ENCODE measurements at regions of chr10 and their contacts with region 1.

Region 1: DNA sequence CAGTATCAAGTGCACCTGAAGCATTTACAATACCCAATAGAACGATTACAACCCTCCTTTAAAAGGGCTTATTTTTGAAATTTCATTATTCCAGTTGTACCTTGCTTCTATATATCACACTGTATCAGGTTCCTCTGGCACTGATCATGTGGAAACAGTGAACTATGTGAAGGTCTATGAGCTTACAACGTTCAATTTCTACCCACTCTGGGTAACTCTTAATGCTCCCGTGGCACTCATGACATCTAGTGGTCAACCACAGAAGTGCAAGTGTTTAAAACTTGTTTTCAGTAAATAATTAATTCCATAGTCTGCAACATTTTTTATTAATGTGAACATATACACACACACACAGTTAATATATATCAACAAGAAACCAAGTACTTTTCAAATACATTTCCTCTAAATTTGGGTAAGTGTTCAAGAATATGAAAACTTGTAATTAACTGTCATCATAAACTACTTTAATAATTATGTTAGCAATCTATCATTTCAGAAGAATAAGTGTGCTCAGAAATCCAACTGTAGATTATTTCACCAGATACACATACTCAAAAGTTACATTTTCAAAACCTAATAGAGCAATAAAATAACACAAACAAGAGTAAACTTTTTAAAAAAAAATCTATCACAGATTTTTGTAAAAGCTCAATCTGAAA is 61.0 kb downstream of the MPP7 start:
- DNase-seq: peak in 1 of 2 experiments; percentile 67
- H3K4me3 ChIP-seq: no peak overlapping the region
- H3K4me3 Mint-ChIP-seq: no peak overlapping the region
- H3K27ac Mint-ChIP-seq: no peak overlapping the region
- H3K4me1 ChIP-seq: peaks cover 13% of the 10 kb centered on the region
- H3K4me1 Mint-ChIP-seq: no peaks in the 10 kb centered on the region
- H3K27me3 ChIP-seq: no peaks in the 10 kb centered on the region
- H3K27me3 Mint-ChIP-seq: no peaks in the 10 kb centered on the region
- CTCF ChIP-seq: peak; percentile 91 to 92

Region 2: DNA sequence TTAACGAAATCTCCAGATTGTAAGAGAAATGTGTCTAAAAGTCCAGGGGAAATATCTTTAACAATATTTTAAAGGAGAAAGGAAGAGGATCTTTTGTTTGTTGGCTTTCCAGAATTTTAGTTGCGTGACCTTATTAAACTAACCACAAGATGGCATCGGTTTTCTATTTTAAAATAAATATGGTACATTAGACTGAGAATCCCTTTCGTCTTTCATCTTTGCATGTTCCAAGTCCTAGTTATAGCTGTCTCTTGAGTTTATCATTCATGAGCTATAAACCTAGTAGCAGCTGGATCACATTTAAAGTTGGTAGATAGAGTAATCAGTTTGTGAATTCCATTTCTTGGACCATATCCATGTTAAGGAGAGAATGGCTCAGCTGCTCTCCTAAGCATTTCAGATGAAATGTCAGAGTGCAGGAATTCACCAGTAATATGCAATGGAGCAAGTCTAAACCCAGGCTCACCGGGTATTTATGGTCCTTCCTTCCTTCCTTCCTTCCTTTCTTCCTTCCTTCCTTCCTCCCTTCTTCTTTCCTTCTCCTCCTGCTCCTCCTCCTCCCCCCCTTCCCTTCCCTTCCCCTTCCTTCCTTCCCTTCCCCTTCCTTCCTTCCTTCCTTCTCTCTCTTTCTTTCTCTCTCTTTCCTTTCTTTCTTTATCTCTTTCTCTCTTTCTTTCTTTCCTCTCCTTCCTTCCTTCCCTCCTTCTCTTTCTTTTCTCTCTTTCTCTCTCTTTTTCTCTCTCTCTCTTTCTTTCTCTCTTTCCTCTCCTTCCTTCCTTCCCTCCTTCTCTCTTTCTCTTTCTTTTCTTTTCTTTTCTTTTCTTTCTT is 795.6 kb before region 1 on chr10:
- CTCF ChIA-PET with region 1: no interaction called
- POLR2A ChIA-PET with region 1: no interaction called
- intact Hi-C with region 1: loop called (anchors 5 kb)
- DNase-seq: peak in 1 of 2 experiments; percentile 34
- H3K4me3 ChIP-seq: no peak overlapping the region
- H3K4me3 Mint-ChIP-seq: peak overlapping the region; percentile 4
- H3K27ac Mint-ChIP-seq: no peak overlapping the region
- H3K4me1 ChIP-seq: no peaks in the 10 kb centered on the region
- H3K4me1 Mint-ChIP-seq: peaks cover 10% of the 10 kb centered on the region
- H3K27me3 ChIP-seq: no peaks in the 10 kb centered on the region
- H3K27me3 Mint-ChIP-seq: no peaks in the 10 kb centered on the region
- CTCF ChIP-seq: peak; percentile 36 to 51

Region 3: GRCh38 chr10:27742195-27743011 is 499.5 kb before region 1 on chr10:
- CTCF ChIA-PET with region 1: interaction called, 8 read pairs
- POLR2A ChIA-PET with region 1: no interaction called
- intact Hi-C with region 1: loop called (anchors 1 kb)
- DNase-seq: peak; percentile 81 to 94
- H3K4me3 ChIP-seq: peak overlapping the region; percentile 75
- H3K4me3 Mint-ChIP-seq: peak overlapping the region; percentile 75
- H3K27ac Mint-ChIP-seq: no peak overlapping the region
- H3K4me1 ChIP-seq: peaks cover 25% of the 10 kb centered on the region
- H3K4me1 Mint-ChIP-seq: peaks cover 5% of the 10 kb centered on the region
- H3K27me3 ChIP-seq: peaks cover 11% of the 10 kb centered on the region
- H3K27me3 Mint-ChIP-seq: peaks cover 30% of the 10 kb centered on the region
- CTCF ChIP-seq: peak; percentile 78 to 86

Region 4: DNA sequence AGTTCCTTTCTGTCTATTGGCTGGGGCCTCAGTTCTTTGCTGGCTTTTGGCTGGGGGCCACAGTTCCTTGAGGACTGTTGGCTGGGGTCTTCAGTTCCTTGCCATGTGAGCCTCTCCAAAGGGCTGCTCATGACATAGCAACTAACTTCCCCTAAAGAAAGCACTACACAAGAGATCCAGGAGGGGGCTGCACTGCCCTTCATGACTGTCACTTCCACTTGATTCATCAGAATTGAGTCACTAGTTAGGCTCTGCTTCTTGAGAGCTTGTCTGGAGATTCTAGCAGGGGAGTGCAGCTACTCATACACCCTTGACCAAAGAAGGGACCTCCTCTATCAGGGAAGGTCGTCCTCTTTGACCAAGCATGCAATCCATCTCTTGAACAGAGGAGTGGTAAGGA is 458.2 kb before region 1 on chr10:
- CTCF ChIA-PET with region 1: interaction called, 7 read pairs
- POLR2A ChIA-PET with region 1: no interaction called
- intact Hi-C with region 1: loop called (anchors 1 kb)
- DNase-seq: peak; percentile 51 to 52
- H3K4me3 ChIP-seq: no peak overlapping the region
- H3K4me3 Mint-ChIP-seq: no peak overlapping the region
- H3K27ac Mint-ChIP-seq: no peak overlapping the region
- H3K4me1 ChIP-seq: no peaks in the 10 kb centered on the region
- H3K4me1 Mint-ChIP-seq: no peaks in the 10 kb centered on the region
- H3K27me3 ChIP-seq: no peaks in the 10 kb centered on the region
- H3K27me3 Mint-ChIP-seq: peaks cover 39% of the 10 kb centered on the region
- CTCF ChIP-seq: peak; percentile 35 to 72

Region 5: DNA sequence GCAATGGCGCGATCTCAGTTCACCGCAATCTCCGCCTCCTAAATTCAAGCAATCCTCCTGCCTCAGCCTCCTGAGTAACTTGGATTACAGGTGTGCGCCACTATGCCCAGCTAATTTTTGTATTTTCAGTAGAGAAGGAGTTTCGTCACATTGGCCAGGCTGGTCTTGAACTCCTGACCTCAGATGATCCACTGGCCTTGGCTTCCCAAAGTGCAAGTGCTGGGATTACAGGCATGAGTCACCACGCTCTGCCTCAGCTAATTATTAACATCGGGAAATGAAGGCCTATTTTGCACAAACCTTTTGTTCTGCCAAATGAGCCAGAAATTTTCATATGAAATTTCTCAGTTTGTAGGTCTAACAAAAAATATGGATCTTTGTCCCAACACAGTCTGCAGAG is 136.3 kb before region 1 on chr10:
- CTCF ChIA-PET with region 1: interaction called, 3 read pairs
- POLR2A ChIA-PET with region 1: no interaction called
- intact Hi-C with region 1: loop called (anchors 10 kb)
- DNase-seq: no peak
- H3K4me3 ChIP-seq: no peak overlapping the region
- H3K4me3 Mint-ChIP-seq: no peak overlapping the region
- H3K27ac Mint-ChIP-seq: no peak overlapping the region
- H3K4me1 ChIP-seq: no peaks in the 10 kb centered on the region
- H3K4me1 Mint-ChIP-seq: no peaks in the 10 kb centered on the region
- H3K27me3 ChIP-seq: no peaks in the 10 kb centered on the region
- H3K27me3 Mint-ChIP-seq: no peaks in the 10 kb centered on the region
- CTCF ChIP-seq: no peak

Region 6: GRCh38 chr10:28179006-28179742 is 62.7 kb before region 1 on chr10:
- CTCF ChIA-PET with region 1: interaction called, 21 read pairs
- POLR2A ChIA-PET with region 1: no interaction called
- intact Hi-C with region 1: loop called (anchors 1 kb)
- DNase-seq: peak in 1 of 2 experiments; percentile 69
- H3K4me3 ChIP-seq: no peak overlapping the region
- H3K4me3 Mint-ChIP-seq: no peak overlapping the region
- H3K27ac Mint-ChIP-seq: no peak overlapping the region
- H3K4me1 ChIP-seq: 0 out of 2 replicates have a peak, but pooled peaks cover 7% of the 10 kb centered on the region
- H3K4me1 Mint-ChIP-seq: peaks cover 22% of the 10 kb centered on the region
- H3K27me3 ChIP-seq: no peaks in the 10 kb centered on the region
- H3K27me3 Mint-ChIP-seq: no peaks in the 10 kb centered on the region
- CTCF ChIP-seq: peak; percentile 75 to 88

Region 7: GRCh38 chr10:28393966-28394568 is 152.2 kb after region 1 on chr10:
- CTCF ChIA-PET with region 1: interaction called, 10 read pairs
- POLR2A ChIA-PET with region 1: no interaction called
- intact Hi-C with region 1: no loop called
- DNase-seq: peak; percentile 79 to 82
- H3K4me3 ChIP-seq: no peak overlapping the region
- H3K4me3 Mint-ChIP-seq: no peak overlapping the region
- H3K27ac Mint-ChIP-seq: no peak overlapping the region
- H3K4me1 ChIP-seq: no peaks in the 10 kb centered on the region
- H3K4me1 Mint-ChIP-seq: peaks cover 8% of the 10 kb centered on the region
- H3K27me3 ChIP-seq: no peaks in the 10 kb centered on the region
- H3K27me3 Mint-ChIP-seq: no peaks in the 10 kb centered on the region
- CTCF ChIP-seq: peak; percentile 99